Mammary epithelial cell (primary cell): ENCODE measurements at regions of chr17 and their contacts with region 1.

Region 1: GRCh38 chr17:77753691-77754245 is 204.7 kb upstream of the TNRC6C start:
- DNase-seq: no peak
- H3K4me3 ChIP-seq: no peak overlapping the region
- H3K27ac ChIP-seq: no peak overlapping the region
- H3K4me1 ChIP-seq: no peaks in the 10 kb centered on the region
- H3K27me3 ChIP-seq: no peaks in the 10 kb centered on the region
- CTCF ChIP-seq: no peak

Region 2: GRCh38 chr17:77690271-77691161 is 63.3 kb before region 1 on chr17:
- CTCF ChIA-PET with region 1: no interaction called
- dilution Hi-C with region 1: loop called (anchors 5 kb)
- in situ Hi-C with region 1: no loop called
- intact Hi-C with region 1: no loop called
- DNase-seq: no peak
- H3K4me3 ChIP-seq: no peak overlapping the region
- H3K27ac ChIP-seq: no peak overlapping the region
- H3K4me1 ChIP-seq: peaks cover 7% of the 10 kb centered on the region
- H3K27me3 ChIP-seq: peaks cover 16% of the 10 kb centered on the region
- CTCF ChIP-seq: no peak

Region 3: DNA sequence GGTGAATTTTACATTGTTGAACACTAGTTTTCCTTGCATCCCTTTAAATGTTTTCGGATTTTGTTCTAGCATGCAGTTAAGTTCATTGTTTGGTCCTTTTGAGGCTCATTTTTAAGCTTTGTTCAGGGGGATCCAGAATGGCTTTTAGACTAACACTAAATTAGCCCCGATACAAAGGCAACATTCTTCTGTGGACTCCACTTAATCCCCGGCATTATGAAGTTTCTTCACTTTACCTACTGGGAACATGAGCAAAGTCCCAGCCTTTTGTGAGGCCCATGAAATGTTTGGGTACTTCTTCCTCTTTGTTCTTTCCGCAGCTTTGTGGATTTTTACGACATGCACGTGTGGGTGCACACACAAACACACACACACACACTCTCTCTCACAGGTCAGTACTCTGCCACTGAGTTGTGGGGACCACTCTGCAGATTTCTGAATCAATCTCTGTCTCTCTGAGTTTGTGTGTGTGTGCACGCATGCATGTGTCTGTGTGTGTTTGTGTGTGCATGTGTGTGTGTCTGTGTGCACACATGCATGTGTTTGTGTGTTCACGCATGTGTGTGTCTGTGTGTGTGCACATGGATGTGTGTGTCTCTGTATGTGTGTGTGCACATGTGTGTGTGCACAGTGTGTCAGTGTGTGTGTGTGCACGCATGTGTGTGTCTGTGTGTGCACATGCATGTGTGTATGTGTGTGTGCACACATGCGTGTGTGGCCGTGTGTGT is 35.7 kb before region 1 on chr17:
- CTCF ChIA-PET with region 1: no interaction called
- dilution Hi-C with region 1: loop called (anchors 5 kb)
- in situ Hi-C with region 1: no loop called
- intact Hi-C with region 1: no loop called
- DNase-seq: no peak
- H3K4me3 ChIP-seq: no peak overlapping the region
- H3K27ac ChIP-seq: no peak overlapping the region
- H3K4me1 ChIP-seq: no peaks in the 10 kb centered on the region
- H3K27me3 ChIP-seq: no peaks in the 10 kb centered on the region
- CTCF ChIP-seq: no peak